Dorsolateral prefrontal cortex (tissue), 120 donors: ENCODE measurements at regions of chr19 and their contacts with region 1.

Region 1: DNA sequence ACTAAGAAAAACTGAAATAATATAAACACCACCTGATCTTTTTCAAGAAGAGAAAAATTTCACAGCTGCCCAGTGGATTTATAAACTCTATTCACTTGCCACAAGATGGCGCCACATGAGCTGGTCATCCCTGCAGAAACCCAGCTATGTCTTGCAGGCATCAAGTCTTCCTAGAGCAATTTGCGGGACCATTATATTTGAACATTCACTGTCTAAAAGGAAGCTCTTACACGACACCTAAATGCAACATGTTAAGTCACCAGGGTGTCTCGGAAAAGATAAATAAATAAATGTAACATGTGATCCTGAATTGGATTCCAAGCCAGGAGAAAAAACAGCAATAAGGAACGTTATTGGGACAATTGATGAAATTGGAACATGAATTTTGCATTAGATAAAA is 20.3 kb upstream of the AKT2 start:
- DNase-seq: peak in 9 of 10 donors; percentile 64 to 80 (median 76)
- H3K4me3 ChIP-seq: peak overlapping the region in 2 of 59 donors; percentile 16 to 41
- H3K27ac ChIP-seq: peak overlapping the region in 1 of 59 donors; percentile 17
- H3K27me3 ChIP-seq: no peaks in the 10 kb centered on the region
- CTCF ChIP-seq: peak; percentile 65 to 94 (median 84)

Region 2: DNA sequence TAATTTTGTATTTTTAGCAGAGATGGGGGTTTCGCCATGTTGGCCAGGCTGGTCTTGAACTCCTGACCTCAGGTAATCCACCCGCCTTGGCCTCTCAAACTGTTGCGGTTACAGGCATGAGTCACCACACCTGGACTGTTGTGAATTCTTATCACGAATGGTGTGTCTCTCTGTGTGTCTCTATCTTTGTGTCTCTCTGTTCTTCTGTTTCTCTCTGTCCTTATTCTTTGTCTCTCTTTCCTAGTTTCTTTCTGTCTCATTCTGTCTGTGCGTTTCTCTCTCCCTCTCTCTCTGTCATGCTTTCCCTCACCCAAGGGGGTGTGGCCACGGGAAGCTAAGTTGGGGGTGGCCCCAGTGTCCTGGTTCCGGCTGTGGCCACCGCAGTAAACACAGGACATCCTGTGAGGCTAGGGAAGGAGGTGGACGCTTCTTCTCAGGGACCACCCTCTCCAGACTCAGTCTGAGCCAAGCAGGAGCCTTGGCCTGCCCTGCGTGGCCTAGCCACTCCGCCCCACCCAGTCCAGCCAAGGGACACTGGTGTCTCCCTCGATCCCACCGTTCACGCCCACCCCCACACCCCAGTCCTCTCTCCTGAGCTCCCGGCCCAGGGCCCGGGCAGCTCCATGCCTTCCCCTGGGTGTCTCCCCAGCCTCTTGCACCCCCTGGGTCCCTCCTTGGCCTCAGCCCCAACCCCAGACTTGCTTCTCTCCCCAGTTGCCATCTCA is 111.7 kb after region 1 on chr19:
- intact Hi-C with region 1: loop called (anchors 2 to 10 kb)
- DNase-seq: no peak
- H3K4me3 ChIP-seq: no peak overlapping the region
- H3K27ac ChIP-seq: peak overlapping the region in 36 of 59 donors; percentile 5 to 71 (median 44)
- H3K27me3 ChIP-seq: peaks cover 0 to 6% (median 0%) of the 10 kb centered on the region in 45 donors
- CTCF ChIP-seq: no peak

Region 3: GRCh38 chr19:40598121-40598917 is 292.9 kb after region 1 on chr19:
- intact Hi-C with region 1: loop called in 1 of 2 experiments (anchors 10 kb)
- DNase-seq: peak; percentile 80 to 92 (median 87)
- H3K4me3 ChIP-seq: peak overlapping the region in 41 of 59 donors; percentile 1 to 52 (median 26)
- H3K27ac ChIP-seq: no peak overlapping the region
- H3K27me3 ChIP-seq: peaks cover 0 to 15% (median 0%) of the 10 kb centered on the region in 45 donors
- CTCF ChIP-seq: peak; percentile 82 to 100 (median 98)